H1 (cell line): ENCODE measurements at regions of chr2 and their contacts with region 1.

Region 1: GRCh38 chr2:70647873-70648481 is 94.4 kb upstream of the TGFA start:
- DNase-seq: peak; percentile 73 to 95
- H3K4me3 ChIP-seq: no peak overlapping the region
- H3K27ac ChIP-seq: no peak overlapping the region
- H3K4me1 ChIP-seq: no peaks in the 10 kb centered on the region
- H3K27me3 ChIP-seq: peaks cover 0 to 3% (median under 1%) of the 10 kb centered on the region in 4 experiments; a peak in 3 of 7 replicates
- CTCF ChIP-seq: peak; percentile 95 to 100 (median 100)
- EP300 ChIP-seq: no peak
- POLR2A ChIP-seq: no peak
- RAD21 ChIP-seq: peak; percentile 98 to 99

Region 2: DNA sequence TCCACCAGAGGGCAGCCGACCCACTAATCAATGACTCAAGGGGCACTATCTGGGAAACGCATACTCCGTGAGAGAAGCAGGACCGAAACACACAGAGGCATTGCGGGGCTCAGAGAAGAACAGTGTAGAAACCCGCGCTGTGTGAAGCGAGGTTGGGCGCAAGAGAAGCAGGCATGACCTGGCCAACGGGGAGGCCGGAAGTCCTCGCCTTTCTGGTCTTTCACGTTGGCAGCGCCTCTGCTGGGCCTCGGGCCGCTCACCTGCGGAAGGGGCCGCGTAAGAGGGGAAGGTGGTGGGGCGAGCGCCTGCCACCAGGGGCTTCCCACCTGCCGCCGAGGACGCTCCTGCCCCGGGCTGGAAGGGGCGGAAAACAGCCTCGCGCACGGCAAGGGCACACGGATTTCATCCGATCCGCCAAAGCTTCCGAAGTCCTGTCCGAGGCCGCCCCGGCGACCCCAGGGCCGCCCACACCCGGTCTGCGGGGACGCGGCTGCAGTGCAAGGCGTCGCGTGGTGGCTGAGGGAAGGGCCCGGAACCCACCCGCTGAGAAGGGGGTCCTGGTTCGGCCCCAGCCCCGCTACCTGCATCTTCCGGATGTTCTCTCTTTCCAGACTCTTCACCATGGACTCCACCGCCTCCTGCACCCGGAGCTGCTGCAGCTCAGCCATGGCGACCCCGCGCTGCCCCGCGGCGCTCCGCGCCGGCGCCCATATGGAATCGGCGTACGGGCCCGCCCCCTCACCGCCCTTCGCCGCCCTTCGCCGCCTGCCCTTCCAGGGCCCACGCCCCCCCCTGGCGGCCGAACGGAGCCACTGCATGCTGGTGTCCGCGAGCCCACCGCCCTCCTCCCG is 346.4 kb before region 1 on chr2 and contains the start of gene FAM136A:
- CTCF ChIA-PET with region 1: interaction called, 120 read pairs
- POLR2A ChIA-PET with region 1: interaction called, 7 read pairs
- DNase-seq: peak; percentile 61 to 98
- H3K4me3 ChIP-seq: peak within 1 kb of the TSS; percentile 63 to 86 (median 75)
- H3K27ac ChIP-seq: peak within 1 kb of the TSS; percentile 87
- H3K4me1 ChIP-seq: peaks cover 0 to 8% (median 5%) of the 10 kb centered on the region in 4 experiments; a peak in 3 of 7 replicates
- H3K27me3 ChIP-seq: no peaks in the 10 kb centered on the region
- CTCF ChIP-seq: peak; percentile 86 to 97 (median 91)
- EP300 ChIP-seq: peak in 1 of 2 experiments; percentile 50; a peak in 1 of 3 replicates
- POLR2A ChIP-seq: peak; percentile 86 to 95
- RAD21 ChIP-seq: peak; percentile 34 to 55; a peak in 3 of 4 replicates
- total RNA-seq, gene FAM136A: 118 and 122 TPM in 2 replicates

Region 3: DNA sequence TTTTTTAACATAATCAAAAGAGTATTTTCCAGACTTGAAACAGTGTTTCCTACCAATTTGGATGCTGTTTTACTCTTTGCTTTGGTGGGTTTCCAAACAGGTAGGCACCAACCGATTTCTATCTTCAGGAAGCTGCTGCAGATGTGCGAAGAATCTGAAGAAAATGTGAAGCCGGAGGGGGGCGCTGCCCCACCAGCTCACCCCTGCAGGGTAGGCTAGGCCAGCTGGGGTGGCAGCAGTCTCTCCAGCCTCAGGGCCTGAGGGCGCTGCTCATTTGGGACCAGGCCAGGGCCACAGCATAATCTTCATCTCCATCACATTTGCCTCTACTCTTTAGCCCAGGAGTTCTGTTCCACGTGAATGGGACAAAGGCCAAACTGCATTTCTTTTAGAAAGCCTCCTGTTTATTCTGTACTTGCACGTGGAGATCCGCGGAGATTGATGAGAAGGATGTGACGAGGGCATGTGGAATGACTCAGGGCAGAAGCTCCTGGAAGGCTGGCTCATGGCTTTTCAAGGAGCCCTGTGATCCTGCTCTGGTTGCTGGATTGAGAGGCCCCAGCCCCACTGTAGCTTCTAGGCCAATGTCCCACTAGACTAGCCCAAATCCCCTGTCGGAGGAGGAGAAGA is 261.9 kb before region 1 on chr2:
- CTCF ChIA-PET with region 1: interaction called, 28 read pairs
- POLR2A ChIA-PET with region 1: no interaction called
- DNase-seq: peak; percentile 31 to 76
- H3K4me3 ChIP-seq: no peak overlapping the region
- H3K27ac ChIP-seq: no peak overlapping the region
- H3K4me1 ChIP-seq: no peaks in the 10 kb centered on the region
- H3K27me3 ChIP-seq: no peaks in the 10 kb centered on the region; a peak in 3 of 7 replicates
- CTCF ChIP-seq: peak; percentile 47 to 74 (median 48)
- EP300 ChIP-seq: no peak
- POLR2A ChIP-seq: no peak
- RAD21 ChIP-seq: peak; percentile 71 to 83

Region 4: GRCh38 chr2:70553584-70554337 is 94.2 kb before region 1 on chr2 and contains the start of gene TGFA:
- CTCF ChIA-PET with region 1: interaction called, 13 read pairs
- POLR2A ChIA-PET with region 1: no interaction called
- DNase-seq: peak; percentile 66 to 88
- H3K4me3 ChIP-seq: peak within 1 kb of the TSS; percentile 45 to 85 (median 66)
- H3K27ac ChIP-seq: no peak within 1 kb of the TSS
- H3K4me1 ChIP-seq: peaks cover 3 to 6% (median 4%) of the 10 kb centered on the region in 4 experiments; a peak in 5 of 7 replicates
- H3K27me3 ChIP-seq: peaks cover 6 to 45% (median 28%) of the 10 kb centered on the region in 4 experiments
- CTCF ChIP-seq: peak; percentile 83 to 89 (median 85)
- EP300 ChIP-seq: 0 out of 3 replicates have a peak, but pooled peaks of 1 of the 2 experiments have one; percentile 29
- POLR2A ChIP-seq: 0 out of 3 replicates have a peak, but pooled peaks of 1 of the 2 experiments have one; percentile 3
- RAD21 ChIP-seq: peak; percentile 66 to 79; a peak in 3 of 4 replicates
- total RNA-seq, gene TGFA: 2.8 and 3.7 TPM in 2 replicates

Region 5: GRCh38 chr2:70627211-70627902 is 20.6 kb before region 1 on chr2:
- CTCF ChIA-PET with region 1: interaction called, 35 read pairs
- POLR2A ChIA-PET with region 1: no interaction called
- DNase-seq: no peak
- H3K4me3 ChIP-seq: no peak overlapping the region
- H3K27ac ChIP-seq: no peak overlapping the region
- H3K4me1 ChIP-seq: peaks cover 4 to 11% (median 5%) of the 10 kb centered on the region in 4 experiments
- H3K27me3 ChIP-seq: no peaks in the 10 kb centered on the region
- CTCF ChIP-seq: no peak
- EP300 ChIP-seq: no peak
- POLR2A ChIP-seq: no peak
- RAD21 ChIP-seq: no peak

Region 6: GRCh38 chr2:70671092-70671675 is 23.2 kb after region 1 on chr2:
- CTCF ChIA-PET with region 1: interaction called, 11 read pairs
- POLR2A ChIA-PET with region 1: no interaction called
- DNase-seq: no peak
- H3K4me3 ChIP-seq: no peak overlapping the region
- H3K27ac ChIP-seq: no peak overlapping the region
- H3K4me1 ChIP-seq: no peaks in the 10 kb centered on the region
- H3K27me3 ChIP-seq: no peaks in the 10 kb centered on the region
- CTCF ChIP-seq: no peak
- EP300 ChIP-seq: no peak
- POLR2A ChIP-seq: no peak
- RAD21 ChIP-seq: no peak